Dorsolateral prefrontal cortex (tissue), 120 donors: ENCODE measurements at regions of chr5 and their contacts with region 1.

Region 1: GRCh38 chr5:168219515-168220410 is 71.7 kb upstream of the WWC1 start:
- DNase-seq: peak in 4 of 10 donors; percentile 20 to 69 (median 50)
- H3K4me3 ChIP-seq: peak overlapping the region in 44 of 59 donors; percentile 3 to 59 (median 34)
- H3K27ac ChIP-seq: peak overlapping the region in 11 of 59 donors; percentile 3 to 53 (median 31)
- H3K27me3 ChIP-seq: no peaks in the 10 kb centered on the region
- CTCF ChIP-seq: peak; percentile 85 to 98 (median 92)

Region 2: GRCh38 chr5:167576126-167576525 is 643.6 kb before region 1 on chr5:
- intact Hi-C with region 1: loop called in 1 of 2 experiments (anchors 5 kb)
- DNase-seq: no peak
- H3K4me3 ChIP-seq: peak overlapping the region in 52 of 59 donors; percentile 3 to 66 (median 48)
- H3K27ac ChIP-seq: peak overlapping the region in 5 of 59 donors; percentile 3 to 49 (median 29)
- H3K27me3 ChIP-seq: peaks cover 0 to 71% (median 11%) of the 10 kb centered on the region in 45 donors
- CTCF ChIP-seq: peak in 18 of 56 donors; percentile 4 to 47 (median 20)

Region 3: DNA sequence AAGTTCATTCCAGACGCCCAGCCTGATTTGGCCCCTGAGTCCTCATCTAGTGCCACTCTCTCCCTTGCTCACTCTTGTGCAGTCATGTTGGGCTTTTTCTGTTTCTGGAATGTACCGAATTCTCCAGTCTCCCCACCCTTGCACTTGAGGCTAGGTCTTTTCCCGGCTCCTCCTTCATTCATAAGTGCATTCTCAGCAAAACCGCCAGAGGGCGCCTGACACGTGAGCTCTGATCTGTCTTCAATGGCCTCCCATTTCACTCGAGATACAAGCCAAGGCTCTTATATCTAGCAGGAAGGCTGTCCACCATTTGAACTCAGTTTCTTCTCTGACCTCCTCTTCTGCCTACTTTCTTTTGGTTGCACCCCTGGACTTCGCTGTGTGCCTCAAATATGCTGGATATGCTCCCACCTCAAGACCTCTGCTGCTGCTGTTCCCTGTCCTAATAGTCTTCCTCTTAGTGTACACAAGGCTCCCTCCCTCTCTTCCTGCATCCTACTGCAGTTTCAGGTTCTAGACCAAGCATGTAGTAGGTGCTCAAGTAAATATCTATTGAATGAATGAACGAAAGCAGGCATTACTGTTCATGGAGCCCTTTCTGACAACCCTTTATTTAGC is 496.4 kb before region 1 on chr5:
- intact Hi-C with region 1: loop called (anchors 1 to 2 kb)
- DNase-seq: peak; percentile 55 to 83 (median 68)
- H3K4me3 ChIP-seq: no peak overlapping the region
- H3K27ac ChIP-seq: no peak overlapping the region
- H3K27me3 ChIP-seq: peaks cover 0 to 5% (median 0%) of the 10 kb centered on the region in 45 donors
- CTCF ChIP-seq: peak; percentile 75 to 97 (median 90)

Region 4: GRCh38 chr5:168047043-168047668 is 172.6 kb before region 1 on chr5:
- intact Hi-C with region 1: loop called in 1 of 2 experiments (anchors 10 kb)
- DNase-seq: peak in 5 of 10 donors; percentile 14 to 45 (median 25)
- H3K4me3 ChIP-seq: no peak overlapping the region
- H3K27ac ChIP-seq: peak overlapping the region in 1 of 59 donors; percentile 8
- H3K27me3 ChIP-seq: no peaks in the 10 kb centered on the region
- CTCF ChIP-seq: peak in 52 of 56 donors; percentile 23 to 70 (median 46)

Region 5: GRCh38 chr5:168114444-168115017 is 105.2 kb before region 1 on chr5:
- intact Hi-C with region 1: loop called in 1 of 2 experiments (anchors 5 kb)
- DNase-seq: peak in 3 of 10 donors; percentile 40 to 49 (median 40)
- H3K4me3 ChIP-seq: no peak overlapping the region
- H3K27ac ChIP-seq: no peak overlapping the region
- H3K27me3 ChIP-seq: peaks cover 0 to 6% (median 0%) of the 10 kb centered on the region in 45 donors
- CTCF ChIP-seq: peak in 51 of 56 donors; percentile 22 to 59 (median 42)